ENCODE measurements at regions of chr1 and their contacts with region 1.

Region 1: DNA sequence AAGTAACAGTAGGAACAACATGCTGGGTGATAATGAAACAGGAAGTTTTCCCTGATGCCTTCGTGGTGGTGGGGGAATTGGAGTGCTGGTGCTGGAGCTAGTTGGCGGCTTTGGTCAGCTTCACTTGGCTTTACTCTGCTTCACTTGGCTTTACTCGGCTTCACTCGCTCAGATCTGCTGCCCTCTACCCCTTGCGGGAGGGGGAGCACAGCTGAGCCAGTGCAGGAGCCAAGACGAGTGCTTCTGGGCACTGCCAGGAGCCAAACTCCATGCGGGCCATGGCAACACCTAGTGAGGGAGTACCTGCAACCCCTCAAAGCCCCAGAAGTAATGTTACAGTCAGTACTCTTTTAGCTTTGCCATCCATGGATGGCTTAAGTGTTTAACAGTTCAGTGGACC is 10.6 kb upstream of the PRKACB start:
- DNase-seq: no peak
- ATAC-seq: no peak
- H3K4me3 ChIP-seq: no peak overlapping the region
- H3K27ac ChIP-seq: no peak overlapping the region
- H3K4me1 ChIP-seq: no peaks in the 10 kb centered on the region
- H3K27me3 ChIP-seq: no peaks in the 10 kb centered on the region
- CTCF ChIP-seq: no peak
- EP300 ChIP-seq: no peak
- POLR2A ChIP-seq: no peak
- RAD21 ChIP-seq: no peak

Region 2: DNA sequence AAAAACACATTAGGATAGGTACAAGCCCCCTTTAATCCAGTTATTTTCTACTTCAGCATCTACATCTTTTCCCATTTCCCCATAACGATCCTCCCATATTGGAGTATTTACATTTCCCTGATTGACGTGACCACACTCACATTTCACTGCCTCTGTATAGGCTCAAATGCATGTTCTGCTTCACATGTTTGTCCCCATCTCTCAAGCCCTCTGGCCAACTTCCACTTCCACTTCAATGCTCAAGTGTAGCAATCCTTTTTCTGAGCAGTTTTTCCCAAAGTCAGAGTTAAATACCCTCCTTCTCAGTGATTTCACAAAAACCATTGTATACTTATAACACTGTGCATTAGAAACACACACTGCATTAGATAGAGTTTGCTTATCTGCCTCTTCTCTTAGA is 72.7 kb before region 1 on chr1:
- CTCF ChIA-PET with region 1: no interaction called
- POLR2A ChIA-PET with region 1: interaction called, 14 read pairs
- RAD21 ChIA-PET with region 1: no interaction called
- SMC1A ChIA-PET with region 1: no interaction called
- in situ Hi-C with region 1: no loop called
- intact Hi-C with region 1: no loop called
- DNase-seq: no peak
- ATAC-seq: no peak
- H3K4me3 ChIP-seq: no peak overlapping the region
- H3K27ac ChIP-seq: no peak overlapping the region
- H3K4me1 ChIP-seq: no peaks in the 10 kb centered on the region
- H3K27me3 ChIP-seq: no peaks in the 10 kb centered on the region
- CTCF ChIP-seq: no peak
- EP300 ChIP-seq: no peak
- POLR2A ChIP-seq: no peak
- RAD21 ChIP-seq: no peak